ENCODE measurements at regions of chr5 and their contacts with region 1.

Region 1: DNA sequence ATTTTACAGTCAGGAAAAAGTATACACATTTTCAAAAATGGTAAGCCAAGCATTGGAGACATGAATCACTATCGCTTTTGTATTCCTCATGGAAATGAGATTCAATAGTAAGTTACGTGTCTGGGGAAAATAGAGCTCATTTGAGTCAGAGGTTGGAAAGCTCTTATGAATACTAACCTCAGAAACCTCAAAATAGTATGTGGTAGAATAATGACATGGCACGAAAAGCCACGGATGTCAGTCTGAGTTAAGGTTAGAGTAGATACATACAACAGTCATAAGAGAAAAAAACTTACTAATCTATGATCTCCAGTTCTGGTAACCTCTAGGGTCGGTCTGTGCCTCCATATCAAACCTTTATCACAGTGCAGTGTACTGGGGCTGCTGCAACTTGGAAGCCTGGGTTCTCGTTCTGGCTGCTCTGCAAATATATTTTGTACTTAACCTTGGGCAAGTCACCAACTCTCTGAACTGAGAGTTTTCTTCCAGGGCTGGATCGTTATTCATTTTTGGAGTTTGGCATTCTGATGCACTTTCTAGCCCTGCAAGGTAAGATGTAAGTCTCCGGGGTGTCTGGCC is 31.8 kb downstream of the MAP1B start:
- DNase-seq: peak; percentile 35
- H3K4me3 Mint-ChIP-seq: no peak overlapping the region
- H3K27ac Mint-ChIP-seq: no peak overlapping the region
- H3K4me1 Mint-ChIP-seq: peaks cover 18% of the 10 kb centered on the region
- H3K27me3 Mint-ChIP-seq: peaks cover 39% of the 10 kb centered on the region

Region 2: GRCh38 chr5:72171667-72172066 is 32.6 kb after region 1 on chr5:
- CTCF ChIA-PET with region 1: no interaction called
- POLR2A ChIA-PET with region 1: no interaction called
- intact Hi-C with region 1: loop called (anchors 2 kb)
- DNase-seq: peak; percentile 67
- H3K4me3 Mint-ChIP-seq: no peak overlapping the region
- H3K27ac Mint-ChIP-seq: no peak overlapping the region
- H3K4me1 Mint-ChIP-seq: peaks cover 20% of the 10 kb centered on the region
- H3K27me3 Mint-ChIP-seq: peaks cover 39% of the 10 kb centered on the region

Region 3: GRCh38 chr5:72206994-72207393 is 68.0 kb after region 1 on chr5:
- CTCF ChIA-PET with region 1: no interaction called
- POLR2A ChIA-PET with region 1: no interaction called
- intact Hi-C with region 1: loop called (anchors 1 kb)
- DNase-seq: peak; percentile 34
- H3K4me3 Mint-ChIP-seq: no peak overlapping the region
- H3K27ac Mint-ChIP-seq: no peak overlapping the region
- H3K4me1 Mint-ChIP-seq: peaks cover 24% of the 10 kb centered on the region
- H3K27me3 Mint-ChIP-seq: no peaks in the 10 kb centered on the region

Region 4: DNA sequence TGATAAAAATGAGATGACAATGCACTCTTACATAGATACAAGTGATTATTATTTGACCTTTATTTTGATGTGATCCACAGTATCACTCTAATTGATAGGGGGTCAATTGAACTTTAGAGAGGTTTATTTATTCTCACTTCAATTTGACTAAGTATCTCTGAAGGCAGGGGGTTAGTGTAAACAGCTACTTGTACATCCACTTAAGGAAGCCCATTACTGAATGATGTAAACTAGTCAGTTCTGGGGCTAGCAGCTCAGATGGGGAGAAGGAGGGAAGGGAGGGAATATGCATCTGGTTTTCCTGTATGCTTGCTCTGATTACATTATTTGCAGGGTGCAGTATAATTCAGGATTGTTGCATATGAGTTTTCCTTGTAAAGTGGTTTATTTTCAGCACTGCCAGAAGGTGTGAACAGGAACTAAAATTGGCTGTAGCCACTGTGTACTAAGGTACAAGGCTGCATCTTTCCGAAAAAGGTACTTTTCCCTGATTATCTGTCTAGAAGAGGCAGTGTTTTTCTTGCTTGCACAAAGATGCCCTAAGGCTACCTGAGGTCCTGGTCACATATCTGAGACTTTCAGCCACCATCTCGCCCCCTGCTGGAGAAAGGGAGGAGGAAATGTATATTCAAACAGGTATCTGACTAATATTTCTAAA is 129.8 kb after region 1 on chr5:
- CTCF ChIA-PET with region 1: interaction called, 4 read pairs
- POLR2A ChIA-PET with region 1: no interaction called
- intact Hi-C with region 1: loop called (anchors 2 kb)
- DNase-seq: peak; percentile 46
- H3K4me3 Mint-ChIP-seq: no peak overlapping the region
- H3K27ac Mint-ChIP-seq: no peak overlapping the region
- H3K4me1 Mint-ChIP-seq: no peaks in the 10 kb centered on the region
- H3K27me3 Mint-ChIP-seq: no peaks in the 10 kb centered on the region

Region 5: GRCh38 chr5:72328172-72328571 is 189.1 kb after region 1 on chr5:
- CTCF ChIA-PET with region 1: no interaction called
- POLR2A ChIA-PET with region 1: no interaction called
- intact Hi-C with region 1: no loop called
- DNase-seq: no peak
- H3K4me3 Mint-ChIP-seq: no peak overlapping the region
- H3K27ac Mint-ChIP-seq: no peak overlapping the region
- H3K4me1 Mint-ChIP-seq: peaks cover 11% of the 10 kb centered on the region
- H3K27me3 Mint-ChIP-seq: no peaks in the 10 kb centered on the region